Aorta (tissue), 5 donors: ENCODE measurements at regions of chr16 and their contacts with region 1.

Region 1: GRCh38 chr16:1420111-1420540 is 421 bp downstream of the UQCC4 start:
- DNase-seq: peak in 1 of 2 donors; percentile 72
- ATAC-seq: no peak
- H3K4me3 ChIP-seq: peak overlapping the region; percentile 37 to 57
- H3K27ac ChIP-seq: peak overlapping the region in 1 of 2 donors; percentile 49
- H3K4me1 ChIP-seq: no peaks in the 10 kb centered on the region
- H3K27me3 ChIP-seq: no peaks in the 10 kb centered on the region

Region 2: GRCh38 chr16:1351582-1352362 is 68.4 kb before region 1 on chr16 and contains the starts of genes GNPTG and TSR3:
- intact Hi-C with region 1: loop called in 1 of 2 experiments (anchors 5 kb)
- DNase-seq: peak; percentile 90 to 94
- ATAC-seq: peak; percentile 85
- H3K4me3 ChIP-seq: peak within 1 kb of the TSS; percentile 67 to 70
- H3K27ac ChIP-seq: no peak within 1 kb of the TSS
- H3K4me1 ChIP-seq: no peaks in the 10 kb centered on the region
- H3K27me3 ChIP-seq: no peaks in the 10 kb centered on the region
- total RNA-seq, gene GNPTG: 45.3 to 55.1 TPM
- total RNA-seq, gene TSR3: 32.1 to 37.5 TPM